T-cell (primary cell): ENCODE measurements at regions of chr20 and their contacts with region 1.

Region 1: DNA sequence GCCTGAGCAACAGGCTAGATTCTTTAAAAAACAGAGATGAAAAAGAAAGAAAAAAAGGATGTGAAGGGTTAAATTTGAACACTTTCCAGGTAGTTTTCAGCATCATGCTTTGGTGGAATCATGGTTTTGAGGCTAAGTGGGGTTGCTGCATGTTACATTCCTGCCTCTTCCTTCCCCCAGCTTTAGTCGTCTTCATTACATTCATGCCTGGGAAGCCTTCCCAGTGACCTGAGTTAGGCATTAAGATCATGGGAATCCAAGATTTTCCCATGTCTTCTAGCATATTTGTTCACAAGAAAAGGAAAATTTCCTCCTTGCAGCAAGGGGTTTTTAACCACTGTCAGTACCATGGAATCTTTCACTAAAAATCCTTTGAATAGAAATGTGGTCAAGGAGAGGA is 12.0 kb downstream of the TPX2 start:
- DNase-seq: no peak
- ATAC-seq: no peak
- H3K4me3 ChIP-seq: no peak overlapping the region
- H3K4me3 Mint-ChIP-seq: no peak overlapping the region
- H3K27ac ChIP-seq: no peak overlapping the region
- H3K27ac Mint-ChIP-seq: no peak overlapping the region
- H3K4me1 ChIP-seq: no peaks in the 10 kb centered on the region
- H3K4me1 Mint-ChIP-seq: peaks cover 0 to 13% (median 3%) of the 10 kb centered on the region in 3 donors
- H3K27me3 ChIP-seq: no peaks in the 10 kb centered on the region
- H3K27me3 Mint-ChIP-seq: no peaks in the 10 kb centered on the region

Region 2: DNA sequence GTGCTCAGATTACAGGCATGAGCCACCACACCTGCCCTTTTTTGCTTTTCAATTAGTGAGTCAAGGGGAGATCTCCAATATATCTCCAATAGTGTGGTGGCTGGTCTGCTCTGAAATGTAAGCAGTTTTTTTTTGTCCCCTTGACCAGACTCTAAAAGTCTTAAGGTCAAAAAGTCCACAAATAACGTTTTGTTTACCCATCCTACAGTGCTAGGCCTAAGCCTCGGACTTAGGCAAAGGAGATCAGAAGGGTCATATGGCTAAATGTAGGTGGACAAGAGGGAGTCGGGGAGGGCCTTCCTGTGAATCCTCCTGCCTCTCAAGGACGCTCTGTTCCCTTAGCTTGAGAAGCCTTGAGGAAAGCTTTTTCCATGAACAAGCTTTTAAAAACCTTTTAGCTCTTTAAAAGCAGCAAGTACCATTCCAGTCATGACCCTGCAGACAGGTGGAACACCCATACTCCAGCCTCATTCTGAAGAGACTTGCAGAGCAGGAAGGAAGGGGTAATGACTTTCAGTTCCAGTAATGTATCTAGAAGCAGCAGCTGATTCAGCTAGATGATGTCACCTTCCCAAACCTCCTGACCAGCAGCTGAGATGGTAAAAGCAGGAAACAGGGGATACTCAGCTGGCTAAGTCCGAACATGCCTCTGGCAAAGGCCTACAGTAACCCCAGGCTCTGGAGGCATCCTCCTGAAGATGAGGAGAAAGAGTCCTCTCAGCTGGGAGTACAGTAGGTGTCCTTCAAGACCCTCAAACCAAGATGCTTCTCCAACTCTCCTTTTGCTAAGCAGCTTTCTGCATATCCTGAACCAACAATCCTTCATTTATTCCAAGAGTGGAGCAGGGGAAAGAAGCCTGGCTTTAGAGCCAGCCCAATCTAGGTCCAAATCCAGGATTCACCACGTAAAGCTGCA is 52.1 kb before region 1 on chr20:
- CTCF ChIA-PET with region 1: no interaction called
- POLR2A ChIA-PET with region 1: interaction called in 1 of 2 experiments, 10 read pairs
- DNase-seq: no peak
- ATAC-seq: peak in 2 of 4 experiments; percentile 47 to 56
- H3K4me3 ChIP-seq: no peak overlapping the region
- H3K4me3 Mint-ChIP-seq: no peak overlapping the region
- H3K27ac ChIP-seq: peak overlapping the region; percentile 41
- H3K27ac Mint-ChIP-seq: peak overlapping the region; percentile 86 to 87
- H3K4me1 ChIP-seq: peaks cover 2 to 33% of the 10 kb centered on the region in 2 experiments
- H3K4me1 Mint-ChIP-seq: peaks cover 50 to 57% (median 53%) of the 10 kb centered on the region in 3 donors
- H3K27me3 ChIP-seq: no peaks in the 10 kb centered on the region
- H3K27me3 Mint-ChIP-seq: no peaks in the 10 kb centered on the region